ENCODE measurements at regions of chr2 and their contacts with region 1.

Region 1: GRCh38 chr2:231925303-231926179 is 655 bp downstream of the NPPC start:
- DNase-seq: peak; percentile 85 to 86 (median 85)
- ATAC-seq: peak; percentile 92 to 95 (median 94)
- H3K4me3 ChIP-seq: peak overlapping the region; percentile 25 to 48 (median 26)
- H3K27ac ChIP-seq: no peak overlapping the region
- H3K4me1 ChIP-seq: peaks cover 0 to 20% (median 10%) of the 10 kb centered on the region in 4 donors
- H3K27me3 ChIP-seq: peaks cover 3 to 6% of the 10 kb centered on the region in 2 donors
- CTCF ChIP-seq: peak; percentile 86 to 97 (median 92)
- POLR2A ChIP-seq: no peak

Region 2: DNA sequence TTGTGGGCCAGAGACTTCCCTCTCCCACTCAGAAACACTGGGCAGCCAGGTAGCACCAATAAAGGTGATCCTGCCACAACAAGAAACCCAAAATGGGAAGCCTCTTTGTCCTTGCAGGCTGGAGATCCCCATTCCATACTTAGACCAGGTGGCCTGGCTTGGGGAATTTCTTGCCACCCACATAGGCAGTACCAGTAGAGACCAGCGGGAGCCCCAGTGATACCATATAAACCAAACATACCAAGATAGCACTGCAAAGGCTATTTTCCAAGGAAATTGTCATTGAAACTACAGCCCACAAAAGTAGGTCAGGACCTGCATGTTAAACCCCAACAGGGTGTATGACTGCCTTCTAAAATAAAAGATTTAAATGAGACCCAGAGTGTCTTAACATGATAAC is 207.5 kb after region 1 on chr2:
- intact Hi-C with region 1: loop called in 1 of 2 experiments (anchors 10 kb)
- DNase-seq: no peak
- ATAC-seq: peak in 1 of 4 donors; percentile 18
- H3K4me3 ChIP-seq: no peak overlapping the region
- H3K27ac ChIP-seq: no peak overlapping the region
- H3K4me1 ChIP-seq: peaks cover 0 to 10% (median 4%) of the 10 kb centered on the region in 4 donors
- H3K27me3 ChIP-seq: no peaks in the 10 kb centered on the region
- CTCF ChIP-seq: no peak
- POLR2A ChIP-seq: no peak

Region 3: GRCh38 chr2:232170396-232170795 is 244.9 kb after region 1 on chr2:
- intact Hi-C with region 1: no loop called
- DNase-seq: no peak
- ATAC-seq: no peak
- H3K4me3 ChIP-seq: no peak overlapping the region
- H3K27ac ChIP-seq: no peak overlapping the region
- H3K4me1 ChIP-seq: no peaks in the 10 kb centered on the region
- H3K27me3 ChIP-seq: no peaks in the 10 kb centered on the region
- CTCF ChIP-seq: no peak
- POLR2A ChIP-seq: no peak

Measured in right lobe of liver (tissue), 6 donors.